ENCODE measurements at regions of chr15 and their contacts with region 1.

Region 1: GRCh38 chr15:76150971-76151598 is 91.3 kb downstream of the TMEM266 start:
- DNase-seq: peak; percentile 84
- ATAC-seq: peak; percentile 90
- H3K4me3 Mint-ChIP-seq: no peak overlapping the region
- H3K27ac Mint-ChIP-seq: no peak overlapping the region
- H3K4me1 Mint-ChIP-seq: peaks cover 12% of the 10 kb centered on the region
- H3K27me3 Mint-ChIP-seq: peaks cover 11% of the 10 kb centered on the region

Region 2: DNA sequence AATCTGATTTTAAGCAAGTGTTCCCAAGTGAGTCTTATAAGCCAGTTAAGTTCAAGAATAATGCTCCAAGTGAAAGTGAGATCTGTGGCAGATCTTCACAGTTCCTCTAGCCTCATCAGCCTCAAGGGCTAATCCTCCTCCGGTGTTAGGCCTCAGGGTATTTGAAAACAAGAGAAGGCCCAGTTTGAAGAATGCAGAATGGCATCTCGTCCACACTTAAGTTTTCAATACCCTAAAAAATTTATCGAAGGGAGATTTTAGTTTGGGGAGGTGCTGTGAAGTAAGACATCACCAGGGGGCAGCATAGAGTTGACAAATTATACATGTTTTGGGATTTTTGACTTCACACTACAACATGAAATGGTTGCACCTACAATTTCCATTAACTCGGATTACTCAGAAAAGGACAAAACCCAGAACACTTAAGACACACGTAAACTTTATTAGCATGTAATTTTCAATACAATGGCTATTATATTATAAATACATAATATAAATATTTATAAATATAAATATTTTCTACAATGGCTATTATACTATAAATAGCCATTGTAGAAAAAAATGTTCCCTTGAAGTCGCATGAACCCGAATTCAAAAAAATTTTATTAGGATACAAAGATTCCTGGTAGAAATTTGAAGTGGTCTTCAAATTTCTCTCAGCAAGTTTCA is 93.6 kb before region 1 on chr15:
- CTCF ChIA-PET with region 1: interaction called, 120 read pairs
- POLR2A ChIA-PET with region 1: no interaction called
- DNase-seq: peak; percentile 65
- ATAC-seq: no peak
- H3K4me3 Mint-ChIP-seq: no peak overlapping the region
- H3K27ac Mint-ChIP-seq: no peak overlapping the region
- H3K4me1 Mint-ChIP-seq: peaks cover 20% of the 10 kb centered on the region
- H3K27me3 Mint-ChIP-seq: peaks cover 55% of the 10 kb centered on the region

Region 3: GRCh38 chr15:76065267-76065666 is 85.8 kb before region 1 on chr15:
- CTCF ChIA-PET with region 1: interaction called, 120 read pairs
- POLR2A ChIA-PET with region 1: no interaction called
- DNase-seq: peak; percentile 68
- ATAC-seq: peak; percentile 98
- H3K4me3 Mint-ChIP-seq: no peak overlapping the region
- H3K27ac Mint-ChIP-seq: no peak overlapping the region
- H3K4me1 Mint-ChIP-seq: peaks cover 16% of the 10 kb centered on the region
- H3K27me3 Mint-ChIP-seq: peaks cover 64% of the 10 kb centered on the region

Region 4: GRCh38 chr15:76163475-76163881 is 12.4 kb after region 1 on chr15:
- CTCF ChIA-PET with region 1: interaction called, 15 read pairs
- POLR2A ChIA-PET with region 1: interaction called, 3 read pairs
- DNase-seq: no peak
- ATAC-seq: no peak
- H3K4me3 Mint-ChIP-seq: no peak overlapping the region
- H3K27ac Mint-ChIP-seq: no peak overlapping the region
- H3K4me1 Mint-ChIP-seq: no peaks in the 10 kb centered on the region
- H3K27me3 Mint-ChIP-seq: no peaks in the 10 kb centered on the region

Region 5: GRCh38 chr15:76177491-76178040 is 26.5 kb after region 1 on chr15:
- CTCF ChIA-PET with region 1: no interaction called
- POLR2A ChIA-PET with region 1: no interaction called
- DNase-seq: no peak
- ATAC-seq: no peak
- H3K4me3 Mint-ChIP-seq: no peak overlapping the region
- H3K27ac Mint-ChIP-seq: no peak overlapping the region
- H3K4me1 Mint-ChIP-seq: peaks cover 6% of the 10 kb centered on the region
- H3K27me3 Mint-ChIP-seq: peaks cover 18% of the 10 kb centered on the region